IMR-90 (cell line): ENCODE measurements at regions of chr13 and their contacts with region 1.

Region 1: GRCh38 chr13:20080377-20081164 is 80.3 kb downstream of the GJA3 start:
- DNase-seq: no peak
- ATAC-seq: no peak
- H3K4me3 ChIP-seq: no peak overlapping the region
- H3K27ac ChIP-seq: no peak overlapping the region
- H3K4me1 ChIP-seq: no peaks in the 10 kb centered on the region; the same call in 1 of the 2 replicates
- H3K27me3 ChIP-seq: no peaks in the 10 kb centered on the region
- CTCF ChIP-seq: no peak
- POLR2A ChIP-seq: no peak
- RAD21 ChIP-seq: no peak

Region 2: GRCh38 chr13:20049558-20050473 is 30.8 kb before region 1 on chr13:
- CTCF ChIA-PET with region 1: no interaction called
- POLR2A ChIA-PET with region 1: no interaction called
- dilution Hi-C with region 1: no loop called
- in situ Hi-C with region 1: no loop called
- intact Hi-C with region 1: loop called (anchors 5 kb)
- DNase-seq: no peak
- ATAC-seq: no peak
- H3K4me3 ChIP-seq: no peak overlapping the region
- H3K27ac ChIP-seq: no peak overlapping the region
- H3K4me1 ChIP-seq: no peaks in the 10 kb centered on the region
- H3K27me3 ChIP-seq: no peaks in the 10 kb centered on the region
- CTCF ChIP-seq: no peak
- POLR2A ChIP-seq: no peak
- RAD21 ChIP-seq: no peak

Region 3: GRCh38 chr13:20118268-20119140 is 37.9 kb after region 1 on chr13:
- CTCF ChIA-PET with region 1: no interaction called
- POLR2A ChIA-PET with region 1: no interaction called
- dilution Hi-C with region 1: no loop called
- in situ Hi-C with region 1: no loop called
- intact Hi-C with region 1: no loop called
- DNase-seq: no peak
- ATAC-seq: peak; percentile 52
- H3K4me3 ChIP-seq: peak overlapping the region; percentile 37
- H3K27ac ChIP-seq: peak overlapping the region; percentile 55; the same call in 1 of the 2 replicates
- H3K4me1 ChIP-seq: peaks cover 8% of the 10 kb centered on the region; the same call in 1 of the 2 replicates
- H3K27me3 ChIP-seq: no peaks in the 10 kb centered on the region; the same call in 1 of the 2 replicates
- CTCF ChIP-seq: no peak
- POLR2A ChIP-seq: no peak
- RAD21 ChIP-seq: no peak

Region 4: DNA sequence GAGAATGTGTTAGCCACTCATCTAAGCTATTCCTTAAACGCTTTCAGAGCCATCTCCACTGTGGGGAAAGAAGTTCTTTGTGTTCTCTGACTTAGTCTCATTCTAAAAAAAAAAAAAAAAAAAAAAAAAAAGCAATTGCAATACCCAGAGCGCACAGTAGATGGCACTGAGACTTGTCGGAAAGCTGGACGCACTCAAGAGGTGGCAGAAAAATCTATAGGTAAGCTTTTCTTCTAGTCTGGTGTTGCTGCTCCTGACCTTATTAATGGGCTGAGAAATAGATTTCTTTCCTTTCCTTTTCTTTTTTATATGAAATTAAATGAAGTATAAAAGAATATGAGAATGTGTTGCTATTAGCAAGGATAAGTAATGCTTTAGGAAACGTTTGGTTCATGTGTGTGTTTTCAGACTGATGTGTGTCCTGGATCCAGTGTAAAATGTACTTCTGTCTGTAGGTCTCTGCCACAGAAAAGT is 116.8 kb after region 1 on chr13:
- CTCF ChIA-PET with region 1: no interaction called
- POLR2A ChIA-PET with region 1: no interaction called
- dilution Hi-C with region 1: no loop called
- in situ Hi-C with region 1: no loop called
- intact Hi-C with region 1: no loop called
- DNase-seq: peak; percentile 56
- ATAC-seq: peak; percentile 73
- H3K4me3 ChIP-seq: no peak overlapping the region
- H3K27ac ChIP-seq: no peak overlapping the region
- H3K4me1 ChIP-seq: peaks cover 2% of the 10 kb centered on the region; the same call in 1 of the 2 replicates
- H3K27me3 ChIP-seq: peaks cover 65% of the 10 kb centered on the region
- CTCF ChIP-seq: peak; percentile 80
- POLR2A ChIP-seq: no peak
- RAD21 ChIP-seq: peak; percentile 76